GM18951 (cell line): ENCODE measurements at regions of chr12 and their contacts with region 1.

Region 1: DNA sequence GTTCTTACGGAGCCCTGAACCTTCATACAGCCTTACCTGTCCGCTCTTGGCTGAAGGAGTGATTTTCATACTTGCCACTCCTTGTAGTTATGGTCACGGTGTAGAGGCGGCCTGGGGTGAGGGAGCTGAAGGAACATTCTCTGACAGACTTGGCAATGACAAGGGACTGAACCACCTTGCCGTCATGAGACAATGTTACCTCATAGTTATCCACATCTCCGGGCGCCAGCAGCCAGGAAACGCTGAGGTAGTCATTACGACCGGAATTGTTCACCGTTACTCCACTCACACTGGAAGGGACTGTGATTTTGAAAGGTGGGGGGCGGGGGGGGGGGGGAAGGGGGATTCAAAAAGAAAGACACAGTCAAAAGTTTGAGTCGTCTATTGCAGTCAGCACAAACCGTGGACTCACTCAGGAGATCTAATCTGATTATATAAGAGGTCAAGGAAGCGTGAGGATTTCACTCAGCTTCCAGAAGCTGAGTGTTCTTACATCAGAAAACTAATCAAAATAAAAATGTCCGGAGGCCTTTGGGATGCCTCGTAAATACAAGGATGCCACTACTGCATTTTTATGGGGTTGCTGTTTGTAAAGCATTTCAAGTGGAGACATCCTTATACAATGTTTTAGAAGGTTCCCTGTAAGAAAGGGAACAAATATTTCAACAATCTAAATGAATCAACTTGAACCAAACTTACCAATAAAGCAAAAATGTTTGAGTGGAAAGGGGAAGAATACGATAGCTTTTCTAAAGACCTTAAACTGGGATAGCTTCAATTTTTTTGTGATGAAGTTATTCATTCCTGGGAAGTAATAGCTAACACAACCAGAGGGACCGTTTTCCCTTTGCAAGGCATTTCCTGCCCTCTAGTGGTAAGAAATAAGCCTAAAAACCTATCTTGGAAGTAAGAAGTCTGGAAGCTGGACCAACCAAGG is 60.6 kb downstream of the PTPRB start:
- POLR2A ChIP-seq: no peak

Region 2: GRCh38 chr12:69900720-69901131 is 675.9 kb before region 1 on chr12:
- in situ Hi-C with region 1: loop called (anchors 10 kb)
- POLR2A ChIP-seq: no peak

Region 3: DNA sequence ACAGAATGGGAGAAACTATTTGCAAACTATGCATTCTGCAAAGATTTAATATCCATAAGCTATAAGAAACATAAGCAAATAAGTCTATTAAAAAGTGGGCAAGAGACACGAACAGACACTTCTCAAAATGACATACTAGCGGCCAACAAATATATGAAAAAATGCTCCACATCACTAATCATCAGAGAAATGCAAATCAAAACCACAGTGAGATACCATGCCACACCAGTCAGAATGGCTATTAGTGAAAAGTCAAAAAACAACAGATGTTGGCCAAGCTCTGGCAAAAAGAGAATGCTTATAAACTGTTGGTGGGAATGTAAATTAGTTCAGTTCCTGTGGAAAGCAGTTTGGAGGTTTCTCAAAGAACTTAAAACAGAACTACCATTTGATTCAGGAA is 89.2 kb before region 1 on chr12:
- in situ Hi-C with region 1: no loop called
- POLR2A ChIP-seq: no peak

Region 4: DNA sequence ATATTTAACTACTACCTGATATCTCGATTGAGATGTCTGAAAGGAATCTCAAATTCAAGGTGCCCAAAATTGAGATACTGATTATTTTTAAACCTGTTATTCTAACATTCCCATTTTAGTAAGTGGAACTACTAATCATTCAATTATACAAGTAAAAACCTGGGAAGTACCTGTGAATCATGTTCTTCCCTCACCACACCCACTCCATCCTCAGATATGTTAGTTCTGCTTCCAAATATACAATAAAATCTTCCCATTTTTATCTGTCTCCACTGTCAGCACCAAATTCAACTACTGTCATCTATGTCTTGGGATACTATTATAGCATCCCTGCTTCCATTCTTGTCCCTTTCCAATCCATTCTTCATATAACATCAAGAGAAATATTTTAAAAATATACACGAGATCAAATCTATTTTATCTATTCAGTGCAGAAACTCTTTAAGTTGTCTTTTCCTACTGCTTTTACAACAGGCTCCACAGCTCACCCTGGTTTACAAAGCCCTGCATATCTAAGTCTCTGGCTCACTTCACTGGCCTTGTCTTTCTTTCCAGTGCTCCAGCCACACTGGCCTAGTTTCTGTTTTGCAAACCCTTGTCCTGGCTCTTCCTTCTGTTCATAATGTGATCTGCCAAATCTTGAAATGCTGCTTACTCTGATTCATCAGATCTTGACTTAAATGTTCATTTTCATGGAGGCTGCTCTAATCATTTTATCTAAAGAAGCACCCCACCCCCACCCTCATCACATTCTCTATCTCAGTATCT is 221.6 kb after region 1 on chr12:
- in situ Hi-C with region 1: no loop called
- POLR2A ChIP-seq: no peak